T-cell (primary cell): ENCODE measurements at regions of chr2 and their contacts with region 1.

Region 1: GRCh38 chr2:70732766-70733645 is 35.0 kb downstream of the ADD2 start:
- DNase-seq: no peak
- ATAC-seq: no peak
- H3K4me3 ChIP-seq: no peak overlapping the region
- H3K4me3 Mint-ChIP-seq: no peak overlapping the region
- H3K27ac ChIP-seq: no peak overlapping the region
- H3K27ac Mint-ChIP-seq: no peak overlapping the region
- H3K4me1 ChIP-seq: no peaks in the 10 kb centered on the region
- H3K4me1 Mint-ChIP-seq: peaks cover 3 to 11% (median 4%) of the 10 kb centered on the region in 3 donors
- H3K27me3 ChIP-seq: peaks cover 0 to 18% of the 10 kb centered on the region in 2 experiments
- H3K27me3 Mint-ChIP-seq: peaks cover 4 to 17% of the 10 kb centered on the region in 2 donors

Region 2: GRCh38 chr2:69238449-69239031 is 1494.5 kb before region 1 on chr2:
- CTCF ChIA-PET with region 1: no interaction called
- POLR2A ChIA-PET with region 1: interaction called in 1 of 2 experiments, 13 read pairs
- DNase-seq: no peak
- ATAC-seq: no peak
- H3K4me3 ChIP-seq: no peak overlapping the region
- H3K4me3 Mint-ChIP-seq: no peak overlapping the region
- H3K27ac ChIP-seq: no peak overlapping the region
- H3K27ac Mint-ChIP-seq: no peak overlapping the region
- H3K4me1 ChIP-seq: no peaks in the 10 kb centered on the region
- H3K4me1 Mint-ChIP-seq: no peaks in the 10 kb centered on the region
- H3K27me3 ChIP-seq: peaks cover 0 to 7% of the 10 kb centered on the region in 2 experiments
- H3K27me3 Mint-ChIP-seq: peaks cover 3 to 7% of the 10 kb centered on the region in 2 donors

Region 3: DNA sequence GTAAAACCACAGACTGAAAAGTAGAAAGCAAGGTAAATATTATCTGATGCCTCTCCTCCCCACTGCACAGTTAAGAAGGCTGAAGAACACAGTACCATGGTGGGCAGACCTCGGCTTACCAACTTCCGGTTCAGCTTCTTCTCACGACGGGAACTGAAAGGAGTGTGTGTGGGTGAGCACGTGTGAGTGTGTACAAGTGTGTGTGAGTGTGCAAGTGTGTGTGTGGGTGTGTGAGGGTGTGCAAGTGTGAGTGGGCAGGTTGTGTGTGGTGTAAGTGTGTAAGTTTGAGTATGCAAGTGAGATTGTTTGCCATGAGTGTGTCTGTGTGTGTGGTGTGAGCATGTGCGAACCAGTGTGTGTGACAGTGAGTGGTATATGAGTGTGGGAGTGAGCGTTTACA is 68.5 kb before region 1 on chr2:
- CTCF ChIA-PET with region 1: no interaction called
- POLR2A ChIA-PET with region 1: no interaction called
- DNase-seq: peak in 15 of 35 experiments; percentile 12 to 42 (median 18)
- ATAC-seq: peak; percentile 69 to 91 (median 79)
- H3K4me3 ChIP-seq: no peak overlapping the region
- H3K4me3 Mint-ChIP-seq: peak overlapping the region in 1 of 3 donors; percentile 58
- H3K27ac ChIP-seq: no peak overlapping the region
- H3K27ac Mint-ChIP-seq: peak overlapping the region; percentile 40 to 87
- H3K4me1 ChIP-seq: peaks cover 11 to 21% of the 10 kb centered on the region in 2 experiments
- H3K4me1 Mint-ChIP-seq: peaks cover 18 to 23% (median 23%) of the 10 kb centered on the region in 3 donors
- H3K27me3 ChIP-seq: no peaks in the 10 kb centered on the region
- H3K27me3 Mint-ChIP-seq: no peaks in the 10 kb centered on the region

Region 4: GRCh38 chr2:70703900-70704549 is 29.0 kb before region 1 on chr2:
- CTCF ChIA-PET with region 1: no interaction called
- POLR2A ChIA-PET with region 1: no interaction called
- DNase-seq: no peak
- ATAC-seq: no peak
- H3K4me3 ChIP-seq: no peak overlapping the region
- H3K4me3 Mint-ChIP-seq: no peak overlapping the region
- H3K27ac ChIP-seq: no peak overlapping the region
- H3K27ac Mint-ChIP-seq: no peak overlapping the region
- H3K4me1 ChIP-seq: no peaks in the 10 kb centered on the region
- H3K4me1 Mint-ChIP-seq: no peaks in the 10 kb centered on the region
- H3K27me3 ChIP-seq: peaks cover 0 to 6% of the 10 kb centered on the region in 2 experiments
- H3K27me3 Mint-ChIP-seq: peaks cover 0 to under 1% of the 10 kb centered on the region in 2 donors

Region 5: DNA sequence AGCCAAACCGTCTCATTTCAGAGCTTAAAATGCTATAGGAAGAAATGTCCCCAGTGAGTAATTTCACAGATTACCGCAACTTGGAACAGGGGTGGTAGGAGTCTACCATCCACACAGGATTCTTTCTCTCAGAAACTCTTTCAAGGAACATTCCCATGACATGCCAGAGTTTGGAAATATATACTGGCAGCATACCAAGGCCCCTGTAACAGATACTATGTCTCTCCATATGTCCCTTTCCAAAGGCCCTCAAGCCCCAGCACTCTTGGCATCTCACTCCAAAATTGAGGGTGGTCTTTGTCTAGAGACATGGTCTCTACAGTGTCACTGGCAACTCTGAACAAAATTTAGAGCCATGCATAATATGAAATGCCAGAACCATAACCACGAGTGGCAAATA is 46.5 kb after region 1 on chr2:
- CTCF ChIA-PET with region 1: no interaction called
- POLR2A ChIA-PET with region 1: no interaction called
- DNase-seq: no peak
- ATAC-seq: no peak
- H3K4me3 ChIP-seq: no peak overlapping the region
- H3K4me3 Mint-ChIP-seq: no peak overlapping the region
- H3K27ac ChIP-seq: no peak overlapping the region
- H3K27ac Mint-ChIP-seq: no peak overlapping the region
- H3K4me1 ChIP-seq: no peaks in the 10 kb centered on the region
- H3K4me1 Mint-ChIP-seq: no peaks in the 10 kb centered on the region
- H3K27me3 ChIP-seq: peaks cover 4 to 12% of the 10 kb centered on the region in 2 experiments
- H3K27me3 Mint-ChIP-seq: peaks cover 17% of the 10 kb centered on the region in 2 donors